Heart right ventricle (tissue), 16 donors: ENCODE measurements at regions of chr16 and their contacts with region 1.

Region 1: GRCh38 chr16:62190426-62190825 is 154.2 kb upstream of the CDH8 start:
- DNase-seq: no peak
- ATAC-seq: no peak
- H3K4me3 ChIP-seq: no peak overlapping the region
- H3K27ac ChIP-seq: no peak overlapping the region
- H3K4me1 ChIP-seq: no peaks in the 10 kb centered on the region
- H3K27me3 ChIP-seq: no peaks in the 10 kb centered on the region
- CTCF ChIP-seq: peak in 7 of 9 donors; percentile 32 to 49 (median 39)

Region 2: GRCh38 chr16:62225697-62226280 is 35.4 kb after region 1 on chr16:
- intact Hi-C with region 1: no loop called
- DNase-seq: peak; percentile 47 to 62
- ATAC-seq: peak in 7 of 8 donors; percentile 25 to 90 (median 66)
- H3K4me3 ChIP-seq: peak overlapping the region in 2 of 10 donors; percentile 16 to 24
- H3K27ac ChIP-seq: no peak overlapping the region
- H3K4me1 ChIP-seq: no peaks in the 10 kb centered on the region
- H3K27me3 ChIP-seq: no peaks in the 10 kb centered on the region
- CTCF ChIP-seq: peak in 7 of 9 donors; percentile 38 to 53 (median 46)

Region 3: DNA sequence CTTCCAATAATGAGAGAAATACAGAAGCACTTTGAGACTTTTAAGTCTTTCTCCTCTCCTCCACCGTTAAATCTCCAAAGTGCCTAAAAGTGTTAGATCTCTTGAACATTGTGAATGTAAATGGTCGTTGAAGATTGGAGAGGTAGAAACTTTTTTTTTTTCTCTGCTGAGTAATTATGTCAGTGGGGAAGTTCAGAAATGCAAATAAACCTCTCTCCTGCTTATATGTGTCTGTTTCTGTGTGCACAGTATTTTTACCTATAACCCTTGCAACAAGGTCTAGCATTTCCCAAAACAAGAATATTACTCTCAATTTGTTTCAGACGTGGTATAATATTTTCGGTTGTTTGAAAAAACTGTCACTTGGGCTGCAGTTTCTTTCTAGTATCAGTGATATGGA is 679.4 kb after region 1 on chr16:
- intact Hi-C with region 1: loop called in 1 of 10 experiments (anchors 10 kb)
- DNase-seq: no peak
- ATAC-seq: no peak
- H3K4me3 ChIP-seq: no peak overlapping the region
- H3K27ac ChIP-seq: no peak overlapping the region
- H3K4me1 ChIP-seq: no peaks in the 10 kb centered on the region
- H3K27me3 ChIP-seq: no peaks in the 10 kb centered on the region
- CTCF ChIP-seq: no peak